G401 (cell line): ENCODE measurements at regions of chr12 and their contacts with region 1.

Region 1: GRCh38 chr12:54214553-54215406 is 26.0 kb upstream of the SMUG1 start:
- DNase-seq: peak; percentile 83

Region 2: DNA sequence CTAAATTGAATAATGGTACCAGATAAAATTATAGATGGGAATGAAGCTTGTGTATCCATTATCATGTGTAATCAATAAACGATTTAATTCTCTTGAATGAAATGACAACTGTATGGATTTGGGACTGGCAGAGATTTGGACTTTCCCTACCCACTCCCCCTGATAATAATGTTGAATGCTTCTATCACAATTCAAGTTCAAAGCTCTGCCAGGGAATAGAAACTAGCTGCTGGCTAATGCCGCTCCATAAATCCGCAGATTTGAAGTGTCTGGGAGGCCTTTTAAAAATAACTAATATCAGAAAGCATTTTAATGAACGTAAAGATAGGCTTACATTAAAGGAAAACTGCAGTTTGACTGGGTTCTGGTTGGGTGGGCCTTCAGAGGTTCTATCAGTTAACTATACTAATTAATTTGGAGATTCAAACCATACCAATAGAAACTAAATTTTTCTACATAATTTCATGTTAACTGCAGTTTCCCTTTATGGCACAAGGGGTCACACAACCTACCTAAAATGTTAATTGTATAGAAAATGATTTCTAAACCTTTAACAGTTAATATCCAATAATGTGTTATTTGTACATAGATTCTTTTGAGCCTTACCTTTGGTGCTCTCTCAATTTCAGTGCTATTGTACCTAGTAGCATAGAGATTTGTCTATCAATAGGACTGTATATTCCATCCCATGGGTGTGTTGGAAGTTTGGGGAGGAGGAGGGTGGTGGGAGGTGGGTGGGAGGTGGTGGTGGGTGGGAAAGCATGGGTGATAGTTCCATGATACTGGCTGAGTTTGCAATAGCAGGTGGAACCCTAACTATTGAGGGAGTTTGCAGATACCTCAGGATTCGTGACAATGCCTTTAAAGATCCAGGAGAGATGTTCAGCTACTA is 70.6 kb after region 1 on chr12:
- in situ Hi-C with region 1: no loop called
- DNase-seq: no peak

Region 3: GRCh38 chr12:54359033-54359761 is 144.4 kb after region 1 on chr12:
- in situ Hi-C with region 1: loop called (anchors 25 kb)
- DNase-seq: peak; percentile 100

Region 4: DNA sequence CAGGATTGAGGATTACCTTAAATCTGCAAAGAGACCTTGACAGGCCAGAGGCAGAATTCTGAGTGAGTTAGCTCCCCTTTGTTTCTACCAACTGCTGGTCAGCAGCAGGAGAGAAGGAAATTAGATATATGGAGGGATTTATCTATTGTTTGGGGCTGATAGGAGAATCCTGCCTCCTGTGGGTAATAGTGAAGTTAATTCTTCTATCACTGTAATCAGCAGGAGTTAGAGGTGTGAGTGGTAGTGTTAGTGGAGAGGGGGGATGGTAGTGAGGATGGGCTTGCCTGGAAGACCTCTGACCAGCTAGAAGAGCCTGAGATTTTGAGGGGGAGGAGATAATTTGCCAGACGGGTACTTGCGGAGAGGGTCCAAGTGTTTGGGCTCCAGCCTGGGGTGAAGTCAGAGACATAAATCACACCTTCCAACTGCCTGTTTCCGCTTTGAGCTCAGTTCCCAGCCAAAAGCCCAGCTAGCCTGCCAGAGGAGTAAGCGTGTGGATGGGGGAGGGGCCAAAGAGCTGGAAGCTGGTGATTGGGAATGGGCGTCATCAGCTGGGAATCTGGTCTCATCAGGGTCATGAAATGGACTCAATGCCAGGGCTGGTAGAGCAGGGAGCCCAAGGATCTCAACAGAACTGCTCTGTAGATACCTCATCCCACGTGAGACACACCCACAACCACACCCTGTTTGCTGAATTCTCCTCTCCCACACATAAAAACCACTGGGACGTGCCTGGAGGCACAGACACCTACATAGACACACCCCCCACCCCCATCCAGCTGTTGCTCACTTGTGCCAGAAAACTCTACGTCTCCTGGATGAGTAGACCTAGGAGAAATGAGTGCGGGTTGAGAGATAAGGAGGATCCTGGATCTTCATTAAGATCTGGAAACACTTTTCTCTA is 217.4 kb after region 1 on chr12:
- in situ Hi-C with region 1: no loop called
- DNase-seq: no peak